PC-9 (cell line): ENCODE measurements at regions of chrX and their contacts with region 1.

Region 1: DNA sequence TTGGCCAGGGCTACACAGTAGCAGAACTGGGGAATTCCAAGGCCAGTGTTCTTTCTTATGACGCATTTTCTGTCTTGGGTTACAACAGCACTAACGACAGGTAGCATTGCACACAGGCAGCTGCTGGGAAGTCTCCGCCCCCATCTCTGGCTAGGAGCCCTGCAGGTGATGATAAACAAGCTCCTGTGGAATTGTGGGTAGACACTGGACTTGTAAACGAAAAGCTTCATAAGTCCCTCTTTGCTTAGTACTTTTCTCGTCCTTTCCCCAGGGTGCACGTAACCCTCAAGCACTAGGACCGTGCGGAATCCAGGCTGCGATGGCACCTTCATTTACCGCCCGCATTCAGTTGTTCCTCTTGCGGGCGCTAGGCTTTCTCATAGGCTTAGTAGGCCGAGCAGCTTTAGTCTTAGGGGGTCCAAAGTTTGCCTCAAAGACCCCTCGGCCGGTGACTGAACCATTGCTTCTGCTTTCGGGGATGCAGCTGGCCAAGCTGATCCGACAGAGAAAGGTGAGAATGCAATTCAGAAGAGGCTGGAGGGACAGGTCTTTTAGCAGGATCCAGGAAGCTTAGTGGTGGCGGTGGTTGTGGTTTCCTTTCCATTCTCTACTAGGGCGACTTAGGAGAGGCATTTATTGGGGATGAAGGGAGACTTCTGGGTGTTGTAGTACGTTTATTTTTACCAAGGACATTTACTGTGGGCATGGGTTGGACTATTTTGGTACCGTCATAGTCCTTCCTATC is at the start of gene FAAH2:
- DNase-seq: peak; percentile 90 to 92
- H3K4me3 ChIP-seq: peak within 1 kb of the TSS; percentile 60
- H3K27ac ChIP-seq: peak within 1 kb of the TSS; percentile 59
- H3K4me1 ChIP-seq: 0 out of 2 replicates have a peak, but pooled peaks cover 13% of the 10 kb centered on the region
- H3K27me3 ChIP-seq: no peaks in the 10 kb centered on the region
- CTCF ChIP-seq: no peak; the same call in 1 of the 2 replicates
- total RNA-seq, gene FAAH2: 8.2 and 10.4 TPM in 2 replicates

Region 2: GRCh38 chrX:55717521-55718497 is 1568.9 kb before region 1 on chrX and contains the start of gene RRAGB:
- CTCF ChIA-PET with region 1: no interaction called
- POLR2A ChIA-PET with region 1: interaction called, 3 read pairs
- intact Hi-C with region 1: loop called (anchors 5 kb)
- DNase-seq: peak; percentile 89 to 96
- H3K4me3 ChIP-seq: peak within 1 kb of the TSS; percentile 91
- H3K27ac ChIP-seq: peak within 1 kb of the TSS; percentile 86
- H3K4me1 ChIP-seq: peaks cover 11% of the 10 kb centered on the region; the same call in 1 of the 2 replicates
- H3K27me3 ChIP-seq: no peaks in the 10 kb centered on the region
- CTCF ChIP-seq: peak; percentile 69
- total RNA-seq, gene RRAGB: 18.6 and 23.3 TPM in 2 replicates

Region 3: DNA sequence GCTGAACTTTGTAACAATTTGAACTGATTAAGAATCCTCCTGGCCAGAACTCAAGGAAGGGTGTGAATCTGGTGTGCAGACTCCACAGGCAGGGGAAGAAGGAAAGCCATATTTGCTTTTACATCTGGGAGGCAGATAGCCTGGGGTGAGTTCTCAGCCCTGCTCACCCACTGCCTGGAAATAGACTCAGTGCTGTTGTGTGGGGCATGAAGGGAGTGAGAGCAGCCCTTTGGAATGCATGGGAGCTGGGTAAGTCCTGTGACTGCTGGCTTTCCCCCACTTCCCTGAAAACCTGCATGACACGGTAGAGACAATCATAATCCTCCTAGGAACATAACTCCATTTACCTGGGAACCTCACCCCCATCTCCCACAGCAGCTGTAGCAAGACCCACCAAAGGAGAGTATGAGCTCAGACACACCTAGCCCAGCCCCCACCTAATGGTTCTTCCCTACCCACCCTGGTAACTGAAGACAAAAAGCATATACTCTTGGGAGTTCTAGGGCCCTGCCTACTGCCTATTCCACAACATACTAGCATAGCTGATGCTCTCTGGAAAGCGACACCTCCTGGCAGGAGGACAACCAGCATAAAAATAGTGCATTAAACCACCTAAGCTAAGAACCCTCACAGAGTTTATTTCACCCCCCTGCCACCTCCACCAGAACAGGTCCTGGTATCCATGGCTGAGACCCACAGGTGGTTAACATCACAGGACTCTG is 782.6 kb before region 1 on chrX:
- CTCF ChIA-PET with region 1: no interaction called
- POLR2A ChIA-PET with region 1: no interaction called
- intact Hi-C with region 1: loop called (anchors 10 kb)
- DNase-seq: peak; percentile 89 to 91
- H3K4me3 ChIP-seq: peak overlapping the region; percentile 46
- H3K27ac ChIP-seq: peak overlapping the region; percentile 100
- H3K4me1 ChIP-seq: peaks cover 57% of the 10 kb centered on the region
- H3K27me3 ChIP-seq: no peaks in the 10 kb centered on the region
- CTCF ChIP-seq: no peak; the same call in 1 of the 2 replicates

Region 4: GRCh38 chrX:56995271-56995994 is 291.2 kb before region 1 on chrX and contains the start of gene SPIN3:
- CTCF ChIA-PET with region 1: no interaction called
- POLR2A ChIA-PET with region 1: interaction called, 3 read pairs
- intact Hi-C with region 1: loop called (anchors 5 kb)
- DNase-seq: peak; percentile 74 to 97
- H3K4me3 ChIP-seq: peak within 1 kb of the TSS; percentile 82
- H3K27ac ChIP-seq: peak within 1 kb of the TSS; percentile 70
- H3K4me1 ChIP-seq: no peaks in the 10 kb centered on the region; the same call in 1 of the 2 replicates
- H3K27me3 ChIP-seq: no peaks in the 10 kb centered on the region
- CTCF ChIP-seq: no peak
- total RNA-seq, gene SPIN3: 29.8 and 39.6 TPM in 2 replicates

Region 5: DNA sequence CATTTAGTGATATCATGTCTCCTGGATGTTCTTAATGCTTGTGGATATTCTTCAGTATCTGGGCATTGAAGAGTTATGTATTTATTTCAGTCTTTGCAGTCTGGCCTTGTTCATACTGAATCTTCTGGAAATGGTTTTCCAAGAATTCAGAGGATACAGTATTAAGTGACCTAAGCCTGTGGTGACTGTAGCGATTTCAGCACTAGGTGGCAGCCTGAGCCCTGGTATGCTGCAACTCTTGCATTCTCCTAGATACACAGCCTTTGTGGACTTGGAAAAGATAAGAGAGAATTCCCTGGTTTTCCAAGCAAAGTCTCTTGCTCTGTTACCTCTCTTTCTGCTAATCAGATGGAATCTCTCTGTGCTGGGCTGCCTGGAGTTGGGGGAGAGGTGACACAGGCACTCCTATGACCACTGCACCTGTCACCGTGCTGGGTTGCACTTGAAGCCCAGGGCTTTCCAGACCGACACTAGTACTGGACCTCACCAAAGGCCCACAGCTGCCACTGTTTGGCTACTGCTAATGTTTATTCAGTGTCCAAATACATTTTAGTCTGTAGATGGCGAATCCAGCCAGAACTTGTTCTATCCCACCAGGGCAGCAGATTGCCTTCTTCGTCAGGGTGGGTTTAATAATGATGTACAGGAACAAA is 130.2 kb before region 1 on chrX:
- CTCF ChIA-PET with region 1: no interaction called
- POLR2A ChIA-PET with region 1: no interaction called
- intact Hi-C with region 1: loop called (anchors 10 kb)
- DNase-seq: peak in 1 of 2 experiments; percentile 33
- H3K4me3 ChIP-seq: no peak overlapping the region
- H3K27ac ChIP-seq: no peak overlapping the region
- H3K4me1 ChIP-seq: no peaks in the 10 kb centered on the region
- H3K27me3 ChIP-seq: no peaks in the 10 kb centered on the region
- CTCF ChIP-seq: peak; percentile 67

Region 6: DNA sequence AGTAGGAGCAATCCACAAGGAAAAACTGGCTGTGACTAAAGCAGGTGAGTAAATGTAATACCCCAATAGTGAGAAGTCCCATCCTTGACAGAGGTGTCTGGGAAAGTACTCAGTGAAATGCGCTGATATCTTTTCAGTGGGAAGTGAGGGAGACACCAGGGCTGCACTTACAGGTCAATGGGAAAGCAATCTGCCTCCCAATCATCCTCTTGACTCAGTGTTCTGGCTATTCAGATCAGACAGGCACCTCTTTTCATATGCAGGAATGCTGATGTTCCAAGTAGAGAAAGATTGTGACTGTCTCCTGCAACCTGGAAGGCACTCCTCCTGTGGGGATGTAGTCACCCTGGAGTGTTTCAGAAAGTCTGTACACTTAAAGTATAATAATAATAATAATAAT is 109.6 kb before region 1 on chrX:
- CTCF ChIA-PET with region 1: no interaction called
- POLR2A ChIA-PET with region 1: no interaction called
- intact Hi-C with region 1: no loop called
- DNase-seq: no peak
- H3K4me3 ChIP-seq: no peak overlapping the region
- H3K27ac ChIP-seq: no peak overlapping the region
- H3K4me1 ChIP-seq: no peaks in the 10 kb centered on the region
- H3K27me3 ChIP-seq: no peaks in the 10 kb centered on the region
- CTCF ChIP-seq: no peak

Region 7: GRCh38 chrX:57595381-57595811 is 308.7 kb after region 1 on chrX:
- CTCF ChIA-PET with region 1: no interaction called
- POLR2A ChIA-PET with region 1: no interaction called
- intact Hi-C with region 1: loop called (anchors 5 kb)
- DNase-seq: peak in 1 of 2 experiments; percentile 84
- H3K4me3 ChIP-seq: peak overlapping the region; percentile 20; the same call in 1 of the 2 replicates
- H3K27ac ChIP-seq: peak overlapping the region; percentile 43
- H3K4me1 ChIP-seq: peaks cover 31% of the 10 kb centered on the region
- H3K27me3 ChIP-seq: no peaks in the 10 kb centered on the region
- CTCF ChIP-seq: no peak